Activated CD4-positive, alpha-beta memory T cell treated with anti-CD3 and anti-CD28 coated beads for 36 hours (primary cell): ENCODE measurements at regions of chr15 and their contacts with region 1.

Region 1: DNA sequence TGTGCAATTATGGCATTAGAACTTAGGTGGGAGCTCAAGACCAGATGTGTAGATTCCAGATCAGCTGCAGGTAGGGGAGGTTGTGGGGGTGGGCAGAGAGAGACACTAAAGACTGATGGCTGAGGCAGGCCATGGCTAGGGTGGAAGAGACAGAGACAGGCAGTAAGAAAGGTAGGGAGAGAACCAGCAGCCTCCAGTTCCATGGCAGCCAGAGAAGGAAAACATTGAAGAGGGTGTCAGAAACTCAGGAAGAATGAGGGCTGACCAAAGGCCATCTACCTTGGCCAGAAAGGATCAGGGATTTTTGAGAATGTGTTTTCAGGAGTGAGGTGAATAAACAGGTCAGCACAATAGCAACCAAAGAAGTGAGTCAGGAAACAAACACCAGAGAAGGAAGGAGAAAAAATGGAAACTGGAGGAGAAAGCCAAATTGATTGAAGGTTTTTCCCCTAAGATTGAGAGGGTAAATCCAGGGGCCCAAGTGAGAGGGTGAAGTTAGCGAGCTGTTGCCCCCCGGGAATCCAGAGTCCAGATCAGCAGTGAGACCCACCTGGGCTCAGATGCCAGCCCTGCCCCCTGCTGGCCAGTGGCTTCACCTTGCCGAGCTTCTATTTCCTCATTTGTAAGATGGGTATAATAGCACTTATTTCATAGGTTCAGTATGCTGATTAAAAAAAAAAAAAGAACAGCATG is 41.0 kb downstream of the ABHD2 start:
- DNase-seq: peak; percentile 68
- H3K4me3 Mint-ChIP-seq: no peak overlapping the region
- H3K27ac Mint-ChIP-seq: no peak overlapping the region
- H3K4me1 Mint-ChIP-seq: peaks cover 29% of the 10 kb centered on the region
- H3K27me3 Mint-ChIP-seq: no peaks in the 10 kb centered on the region

Region 2: DNA sequence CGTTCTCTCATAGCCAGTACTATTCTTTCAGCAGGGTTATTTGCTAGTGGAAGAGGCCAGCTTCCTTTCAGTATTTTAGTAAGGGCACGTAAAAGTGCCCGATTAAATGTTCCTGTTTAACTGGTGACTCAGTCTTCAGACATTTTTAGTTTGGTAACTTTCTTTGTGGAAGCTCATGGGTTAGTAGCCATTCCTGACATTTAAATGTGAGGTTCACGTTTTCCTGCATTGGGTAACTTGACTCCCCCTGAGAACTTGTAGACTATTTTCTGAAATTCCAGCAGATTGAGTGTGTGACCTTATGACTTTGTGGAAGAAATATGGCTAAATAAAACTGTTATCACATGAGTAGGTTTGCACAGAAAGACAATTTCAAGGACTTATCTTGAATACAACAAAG is 24.1 kb before region 1 on chr15:
- CTCF ChIA-PET with region 1: interaction called, 10 read pairs
- POLR2A ChIA-PET with region 1: no interaction called
- intact Hi-C with region 1: no loop called
- DNase-seq: no peak
- H3K4me3 Mint-ChIP-seq: no peak overlapping the region
- H3K27ac Mint-ChIP-seq: no peak overlapping the region
- H3K4me1 Mint-ChIP-seq: peaks cover 38% of the 10 kb centered on the region
- H3K27me3 Mint-ChIP-seq: no peaks in the 10 kb centered on the region

Region 3: GRCh38 chr15:89143503-89144162 is 14.4 kb after region 1 on chr15:
- CTCF ChIA-PET with region 1: interaction called, 25 read pairs
- POLR2A ChIA-PET with region 1: no interaction called
- intact Hi-C with region 1: no loop called
- DNase-seq: peak; percentile 31
- H3K4me3 Mint-ChIP-seq: no peak overlapping the region
- H3K27ac Mint-ChIP-seq: peak overlapping the region; percentile 28
- H3K4me1 Mint-ChIP-seq: peaks cover 21% of the 10 kb centered on the region
- H3K27me3 Mint-ChIP-seq: no peaks in the 10 kb centered on the region

Region 4: GRCh38 chr15:89171136-89172072 is 42.1 kb after region 1 on chr15:
- CTCF ChIA-PET with region 1: interaction called, 29 read pairs
- POLR2A ChIA-PET with region 1: no interaction called
- intact Hi-C with region 1: loop called (anchors 5 kb)
- DNase-seq: peak; percentile 53
- H3K4me3 Mint-ChIP-seq: no peak overlapping the region
- H3K27ac Mint-ChIP-seq: no peak overlapping the region
- H3K4me1 Mint-ChIP-seq: peaks cover 24% of the 10 kb centered on the region
- H3K27me3 Mint-ChIP-seq: no peaks in the 10 kb centered on the region